ENCODE measurements at regions of chr15 and their contacts with region 1.

Region 1: DNA sequence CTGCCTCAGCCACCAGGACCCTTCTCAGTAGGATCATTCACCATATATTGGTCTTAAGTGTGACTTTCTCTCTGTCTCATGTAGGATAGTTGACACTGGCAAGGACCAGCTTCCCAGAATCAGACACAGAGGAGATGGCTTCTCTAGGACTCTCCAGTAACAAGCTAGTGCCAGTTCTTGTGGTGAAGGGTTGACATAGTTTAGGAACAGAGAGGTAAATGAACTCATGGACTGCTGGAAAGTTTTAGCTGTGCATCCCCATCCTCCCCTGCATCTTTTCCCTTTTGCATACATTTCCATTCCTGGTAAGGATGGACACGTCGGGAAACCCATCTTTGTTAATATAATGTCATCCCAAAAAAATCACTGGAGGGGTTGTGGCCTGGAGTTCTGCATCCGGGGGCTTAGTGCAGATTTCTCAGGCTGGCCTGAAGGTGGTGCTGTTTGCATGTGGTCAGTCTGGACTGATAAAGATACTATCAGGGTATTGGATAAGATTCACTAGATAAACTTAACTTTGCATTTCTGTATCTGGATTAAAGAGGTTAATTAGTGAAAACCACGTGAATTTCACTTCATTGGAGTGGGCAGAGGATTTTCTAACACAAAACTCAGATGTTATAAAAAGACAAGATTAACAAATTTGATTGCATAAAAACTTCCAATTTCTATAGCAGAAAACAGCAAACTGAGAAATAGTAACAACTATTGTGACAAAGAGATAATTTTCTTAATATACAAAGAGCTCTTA is 110.8 kb downstream of the TBC1D2B start:
- H3K4me3 ChIP-seq: no peak overlapping the region
- H3K27ac ChIP-seq: no peak overlapping the region
- H3K4me1 ChIP-seq: no peaks in the 10 kb centered on the region
- CTCF ChIP-seq: no peak

Region 2: GRCh38 chr15:77881950-77882349 is 84.8 kb before region 1 on chr15:
- CTCF ChIA-PET with region 1: no interaction called
- POLR2A ChIA-PET with region 1: no interaction called
- H3K4me3 ChIP-seq: no peak overlapping the region
- H3K27ac ChIP-seq: no peak overlapping the region
- H3K4me1 ChIP-seq: no peaks in the 10 kb centered on the region
- CTCF ChIP-seq: no peak

Region 3: DNA sequence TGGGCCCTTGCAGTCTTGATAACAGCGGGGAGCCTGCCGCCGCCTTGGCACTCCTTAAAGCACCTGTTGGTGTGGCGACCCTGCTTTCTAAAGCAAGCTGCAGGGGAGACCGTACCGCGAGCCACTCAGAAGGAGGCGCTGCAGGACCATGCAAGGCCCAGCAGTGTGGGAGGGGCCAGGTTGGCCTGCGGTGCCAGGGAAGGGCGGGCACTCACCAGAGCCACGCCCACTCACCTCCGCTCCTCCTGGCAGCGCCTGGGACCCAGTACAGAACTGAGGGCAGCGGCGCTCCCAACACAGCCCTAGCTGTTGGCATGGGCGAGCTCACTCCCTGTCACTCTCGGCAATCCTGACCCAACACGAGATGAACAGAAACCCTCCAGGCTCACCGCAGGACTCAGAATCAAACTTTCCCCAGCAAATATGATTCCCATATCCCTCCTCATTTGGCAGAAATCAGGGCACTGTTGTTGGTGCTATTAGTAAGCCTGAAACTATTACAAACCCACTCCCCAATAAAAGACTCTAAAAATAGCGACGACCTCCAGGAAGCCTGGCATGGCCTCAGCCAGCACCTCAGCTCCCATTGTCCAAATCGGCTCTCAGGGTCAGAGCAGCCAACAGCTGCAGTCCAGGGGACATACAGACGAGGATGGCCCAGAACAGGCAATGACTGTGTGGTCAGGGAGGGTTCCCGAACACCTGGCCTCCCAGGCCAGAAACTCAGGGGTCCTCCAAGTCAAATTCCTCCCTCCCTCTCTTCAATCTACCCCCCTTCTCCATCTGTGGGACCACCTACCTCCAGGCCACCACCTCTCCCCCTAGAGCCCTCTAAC is 33.6 kb after region 1 on chr15:
- CTCF ChIA-PET with region 1: interaction called, 11 read pairs
- POLR2A ChIA-PET with region 1: no interaction called
- H3K4me3 ChIP-seq: no peak overlapping the region
- H3K27ac ChIP-seq: no peak overlapping the region
- H3K4me1 ChIP-seq: peaks cover 6% of the 10 kb centered on the region; the same call in 1 of the 2 replicates
- CTCF ChIP-seq: peak; percentile 87

Measured in HEK293 (cell line).